Calu3 (cell line): ENCODE measurements at regions of chrX and their contacts with region 1.

Region 1: GRCh38 chrX:68828740-68829552 is at the start of gene EFNB1:
- DNase-seq: peak; percentile 91
- H3K4me3 Mint-ChIP-seq: peak within 1 kb of the TSS; percentile 87
- H3K27ac Mint-ChIP-seq: peak within 1 kb of the TSS; percentile 85
- H3K4me1 Mint-ChIP-seq: peaks cover 37% of the 10 kb centered on the region
- H3K27me3 Mint-ChIP-seq: peaks cover 23% of the 10 kb centered on the region
- CTCF ChIP-seq: no peak
- total RNA-seq, gene EFNB1: 12.6 and 20.7 TPM in 2 replicates

Region 2: GRCh38 chrX:68894513-68895340 is 65.8 kb after region 1 on chrX:
- CTCF ChIA-PET with region 1: interaction called, 16 read pairs
- intact Hi-C with region 1: loop called (anchors 2 kb)
- DNase-seq: peak; percentile 21
- H3K4me3 Mint-ChIP-seq: peak overlapping the region; percentile 28
- H3K27ac Mint-ChIP-seq: peak overlapping the region; percentile 60
- H3K4me1 Mint-ChIP-seq: peaks cover 15% of the 10 kb centered on the region
- H3K27me3 Mint-ChIP-seq: no peaks in the 10 kb centered on the region
- CTCF ChIP-seq: no peak

Region 3: GRCh38 chrX:69031221-69031620 is 202.3 kb after region 1 on chrX:
- CTCF ChIA-PET with region 1: interaction called, 15 read pairs
- intact Hi-C with region 1: loop called (anchors 10 kb)
- DNase-seq: peak; percentile 3
- H3K4me3 Mint-ChIP-seq: no peak overlapping the region
- H3K27ac Mint-ChIP-seq: no peak overlapping the region
- H3K4me1 Mint-ChIP-seq: peaks cover 10% of the 10 kb centered on the region
- H3K27me3 Mint-ChIP-seq: peaks cover 16% of the 10 kb centered on the region
- CTCF ChIP-seq: no peak

Region 4: DNA sequence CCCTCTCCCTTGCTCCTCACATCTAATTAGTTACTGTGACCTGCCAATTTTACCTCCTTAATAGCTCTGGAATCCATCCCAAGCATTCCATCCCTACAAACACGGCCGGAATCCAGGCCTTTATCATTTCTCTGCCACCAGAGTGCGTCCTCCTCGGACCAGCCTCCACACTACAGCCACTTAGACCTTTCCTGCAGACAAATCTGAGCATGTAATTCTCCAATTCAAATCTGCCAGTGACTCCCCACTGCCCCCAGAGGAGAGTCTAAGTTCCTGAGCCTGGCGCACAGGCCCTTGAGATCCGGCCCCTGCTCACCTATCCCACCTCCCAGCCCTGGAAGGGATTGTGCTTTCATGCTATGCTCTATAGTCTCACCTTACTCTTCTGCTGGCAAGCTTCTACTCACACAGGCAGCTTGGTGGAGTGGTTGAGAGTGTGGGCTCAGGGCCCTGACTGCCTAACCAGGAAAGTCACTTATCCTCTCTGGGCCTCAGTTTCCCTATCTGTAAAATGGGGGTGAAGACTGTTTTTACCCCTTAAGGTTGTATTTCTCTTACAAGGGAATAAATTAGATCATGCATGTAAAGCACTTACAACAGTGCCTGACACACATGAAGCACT is 305.1 kb after region 1 on chrX:
- CTCF ChIA-PET with region 1: interaction called, 7 read pairs
- intact Hi-C with region 1: loop called (anchors 5 kb)
- DNase-seq: peak; percentile 70
- H3K4me3 Mint-ChIP-seq: no peak overlapping the region
- H3K27ac Mint-ChIP-seq: no peak overlapping the region
- H3K4me1 Mint-ChIP-seq: peaks cover 14% of the 10 kb centered on the region
- H3K27me3 Mint-ChIP-seq: peaks cover 16% of the 10 kb centered on the region
- CTCF ChIP-seq: peak; percentile 51

Region 5: GRCh38 chrX:69387567-69388487 is 558.9 kb after region 1 on chrX:
- CTCF ChIA-PET with region 1: interaction called, 16 read pairs
- intact Hi-C with region 1: no loop called
- DNase-seq: peak; percentile 66
- H3K4me3 Mint-ChIP-seq: no peak overlapping the region
- H3K27ac Mint-ChIP-seq: no peak overlapping the region
- H3K4me1 Mint-ChIP-seq: no peaks in the 10 kb centered on the region
- H3K27me3 Mint-ChIP-seq: peaks cover 99% of the 10 kb centered on the region
- CTCF ChIP-seq: peak; percentile 53